Heart left ventricle (tissue), 16 donors: ENCODE measurements at regions of chr16 and their contacts with region 1.

Region 1: GRCh38 chr16:3490911-3491629 is 4.2 kb downstream of the C16orf90 start:
- DNase-seq: peak in 2 of 5 donors; percentile 22 to 58
- ATAC-seq: peak in 3 of 4 donors; percentile 7 to 22 (median 21)
- H3K4me3 ChIP-seq: no peak overlapping the region
- H3K27ac ChIP-seq: no peak overlapping the region
- H3K4me1 ChIP-seq: peaks cover 0 to 13% (median 1%) of the 10 kb centered on the region in 12 donors
- H3K27me3 ChIP-seq: no peaks in the 10 kb centered on the region
- CTCF ChIP-seq: peak in 2 of 12 donors; percentile 18 to 21
- POLR2A ChIP-seq: no peak

Region 2: GRCh38 chr16:3292604-3293003 is 198.5 kb before region 1 on chr16:
- intact Hi-C with region 1: loop called in 1 of 10 experiments (anchors 10 kb)
- DNase-seq: no peak
- ATAC-seq: no peak
- H3K4me3 ChIP-seq: no peak overlapping the region
- H3K27ac ChIP-seq: no peak overlapping the region
- H3K4me1 ChIP-seq: no peaks in the 10 kb centered on the region
- H3K27me3 ChIP-seq: no peaks in the 10 kb centered on the region
- CTCF ChIP-seq: no peak
- POLR2A ChIP-seq: no peak

Region 3: GRCh38 chr16:3690470-3690928 is 199.4 kb after region 1 on chr16:
- intact Hi-C with region 1: no loop called
- DNase-seq: peak; percentile 89 to 94 (median 92)
- ATAC-seq: peak; percentile 86 to 96 (median 94)
- H3K4me3 ChIP-seq: peak overlapping the region in 10 of 12 donors; percentile 27 to 56 (median 43)
- H3K27ac ChIP-seq: peak overlapping the region in 10 of 12 donors; percentile 14 to 72 (median 56)
- H3K4me1 ChIP-seq: peaks cover 0 to 20% (median 15%) of the 10 kb centered on the region in 12 donors
- H3K27me3 ChIP-seq: no peaks in the 10 kb centered on the region
- CTCF ChIP-seq: peak; percentile 90 to 99 (median 95)
- POLR2A ChIP-seq: no peak